IMR-90 (cell line): ENCODE measurements at regions of chr2 and their contacts with region 1.

Region 1: DNA sequence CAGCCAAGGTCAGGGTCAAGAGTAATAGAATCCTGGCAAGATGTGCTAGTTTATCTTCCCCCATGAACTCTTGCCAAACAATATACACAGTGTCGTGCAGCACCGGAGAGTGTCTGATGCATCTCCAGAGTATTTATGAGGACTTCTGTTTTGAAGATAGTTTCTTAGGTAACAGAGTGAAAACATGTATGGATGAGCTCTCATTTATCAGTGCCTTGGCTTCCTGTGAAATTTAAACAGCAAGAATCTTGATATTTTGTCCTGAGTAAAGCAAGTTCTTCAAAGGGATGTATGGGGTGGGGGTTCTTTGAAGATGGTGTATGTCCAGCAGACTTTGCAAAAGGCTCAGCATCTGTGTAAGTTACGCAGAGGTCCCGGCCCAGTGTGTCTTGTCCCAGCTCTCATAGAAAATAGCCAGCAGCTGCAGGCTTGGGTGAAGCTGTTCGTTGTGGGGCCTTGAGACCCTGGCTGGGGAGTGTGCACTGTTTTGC is 361.0 kb upstream of the NT5C1B start:
- DNase-seq: peak; percentile 93
- ATAC-seq: peak; percentile 92
- H3K4me3 ChIP-seq: no peak overlapping the region
- H3K27ac ChIP-seq: peak overlapping the region; percentile 73; the same call in 1 of the 2 replicates
- H3K4me1 ChIP-seq: peaks cover 9% of the 10 kb centered on the region
- H3K27me3 ChIP-seq: no peaks in the 10 kb centered on the region
- CTCF ChIP-seq: no peak
- POLR2A ChIP-seq: no peak
- RAD21 ChIP-seq: no peak

Region 2: DNA sequence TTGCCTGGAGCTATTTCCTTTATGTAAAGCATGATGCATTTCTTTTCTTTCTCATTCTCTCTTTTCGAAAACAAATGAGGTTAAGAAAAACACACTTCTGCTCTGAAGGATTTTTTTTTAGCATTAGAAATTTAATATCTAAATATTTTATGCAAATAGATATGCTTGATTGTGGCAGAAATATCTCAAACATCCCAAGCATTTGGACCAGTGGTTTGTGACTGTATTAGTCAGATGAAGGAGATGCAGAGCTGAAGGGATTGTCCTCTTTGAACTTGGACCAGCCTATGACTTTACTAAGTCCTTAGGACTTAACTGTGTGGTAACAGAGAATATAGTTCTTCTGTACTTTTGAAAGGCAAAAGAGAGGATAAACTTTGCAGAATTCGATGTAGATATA is 25.1 kb before region 1 on chr2:
- CTCF ChIA-PET with region 1: no interaction called
- POLR2A ChIA-PET with region 1: no interaction called
- dilution Hi-C with region 1: no loop called
- in situ Hi-C with region 1: no loop called
- intact Hi-C with region 1: loop called (anchors 2 kb)
- DNase-seq: peak; percentile 94
- ATAC-seq: peak; percentile 94
- H3K4me3 ChIP-seq: no peak overlapping the region
- H3K27ac ChIP-seq: peak overlapping the region; percentile 47; the same call in 1 of the 2 replicates
- H3K4me1 ChIP-seq: peaks cover 16% of the 10 kb centered on the region
- H3K27me3 ChIP-seq: no peaks in the 10 kb centered on the region
- CTCF ChIP-seq: no peak
- POLR2A ChIP-seq: no peak
- RAD21 ChIP-seq: 0 out of 2 replicates have a peak, but pooled peaks have one; percentile 11